Right lobe of liver (tissue), 6 donors: ENCODE measurements at regions of chr1 and their contacts with region 1.

Region 1: DNA sequence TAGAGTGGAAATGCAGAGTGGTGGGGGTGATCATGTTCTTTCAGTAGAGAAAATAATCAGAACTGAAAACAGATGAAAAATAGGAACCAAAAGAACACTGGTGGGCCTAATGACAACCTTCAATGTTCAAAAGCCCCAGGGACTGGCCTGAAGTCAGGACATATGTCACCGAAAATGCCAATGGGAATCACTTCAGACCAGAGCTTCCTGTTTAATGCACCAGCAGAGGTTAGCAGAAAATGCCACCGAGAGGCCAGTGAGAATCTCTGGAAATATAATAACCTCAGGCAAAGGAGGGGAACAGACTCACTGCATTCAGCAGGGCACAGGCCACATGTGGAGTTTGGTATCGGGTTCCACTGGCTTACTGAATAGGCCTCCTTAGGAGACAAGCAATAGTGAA is 15.9 kb upstream of the CD58 start:
- DNase-seq: no peak
- ATAC-seq: no peak
- H3K4me3 ChIP-seq: no peak overlapping the region
- H3K27ac ChIP-seq: no peak overlapping the region
- H3K4me1 ChIP-seq: no peaks in the 10 kb centered on the region
- H3K27me3 ChIP-seq: no peaks in the 10 kb centered on the region
- CTCF ChIP-seq: no peak
- POLR2A ChIP-seq: no peak

Region 2: DNA sequence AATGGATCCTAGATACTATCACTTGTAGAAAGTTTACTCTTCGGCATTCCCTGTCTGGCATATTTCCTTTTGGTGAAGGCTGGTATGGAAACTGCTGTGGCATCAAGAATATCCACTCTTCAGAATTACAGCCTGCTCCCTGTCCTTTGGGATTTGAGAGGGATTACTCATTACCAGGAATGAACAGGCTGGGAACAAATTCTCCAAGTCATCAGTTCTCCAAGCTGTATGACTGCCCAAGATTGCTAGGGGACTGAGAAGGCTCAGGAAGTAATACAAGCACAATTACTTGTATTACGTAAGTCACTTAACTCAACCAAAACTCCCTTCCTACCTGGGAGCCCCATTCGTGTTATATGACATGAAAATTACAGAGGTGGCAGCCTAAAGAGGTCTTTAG is 65.6 kb before region 1 on chr1:
- intact Hi-C with region 1: no loop called
- DNase-seq: no peak
- ATAC-seq: no peak
- H3K4me3 ChIP-seq: no peak overlapping the region
- H3K27ac ChIP-seq: no peak overlapping the region
- H3K4me1 ChIP-seq: no peaks in the 10 kb centered on the region
- H3K27me3 ChIP-seq: no peaks in the 10 kb centered on the region
- CTCF ChIP-seq: no peak
- POLR2A ChIP-seq: no peak

Region 3: GRCh38 chr1:116679091-116679827 is 92.5 kb after region 1 on chr1:
- intact Hi-C with region 1: loop called in 1 of 2 experiments (anchors 10 kb)
- DNase-seq: no peak
- ATAC-seq: no peak
- H3K4me3 ChIP-seq: no peak overlapping the region
- H3K27ac ChIP-seq: no peak overlapping the region
- H3K4me1 ChIP-seq: no peaks in the 10 kb centered on the region
- H3K27me3 ChIP-seq: no peaks in the 10 kb centered on the region
- CTCF ChIP-seq: no peak
- POLR2A ChIP-seq: no peak